A549 (cell line): ENCODE measurements at regions of chr1 and their contacts with region 1.

Region 1: GRCh38 chr1:26602378-26602959 is 72.9 kb downstream of the RPS6KA1 start:
- DNase-seq: peak; percentile 48
- ATAC-seq: no peak
- H3K4me3 ChIP-seq: no peak overlapping the region
- H3K27ac ChIP-seq: no peak overlapping the region
- H3K4me1 ChIP-seq: no peaks in the 10 kb centered on the region
- CTCF ChIP-seq: peak; percentile 81
- EP300 ChIP-seq: no peak
- POLR2A ChIP-seq: no peak
- RAD21 ChIP-seq: peak; percentile 88 to 91

Region 2: DNA sequence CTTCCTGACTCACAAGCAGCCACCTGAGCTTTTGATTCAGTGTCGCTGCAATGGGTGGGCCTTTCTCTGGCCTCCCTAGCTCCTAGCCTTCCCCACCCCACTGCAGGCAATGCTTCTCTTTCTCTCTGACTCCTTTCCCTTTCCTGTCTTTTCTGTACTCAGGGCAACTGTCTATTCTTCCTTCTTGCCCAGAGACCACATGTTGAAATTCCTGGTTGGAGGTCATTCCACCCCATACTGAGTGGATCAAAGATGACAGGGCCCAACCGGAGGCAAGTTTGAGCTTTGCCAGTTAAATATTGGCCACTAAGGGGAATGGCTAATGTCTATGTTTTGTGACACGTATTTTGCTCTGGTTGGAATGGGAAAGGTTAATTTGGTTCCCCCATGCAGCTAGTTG is 28.2 kb after region 1 on chr1:
- CTCF ChIA-PET with region 1: no interaction called
- POLR2A ChIA-PET with region 1: no interaction called
- DNase-seq: no peak
- ATAC-seq: no peak
- H3K4me3 ChIP-seq: no peak overlapping the region
- H3K27ac ChIP-seq: no peak overlapping the region
- H3K4me1 ChIP-seq: no peaks in the 10 kb centered on the region
- CTCF ChIP-seq: no peak
- EP300 ChIP-seq: no peak
- POLR2A ChIP-seq: no peak
- RAD21 ChIP-seq: no peak

Region 3: DNA sequence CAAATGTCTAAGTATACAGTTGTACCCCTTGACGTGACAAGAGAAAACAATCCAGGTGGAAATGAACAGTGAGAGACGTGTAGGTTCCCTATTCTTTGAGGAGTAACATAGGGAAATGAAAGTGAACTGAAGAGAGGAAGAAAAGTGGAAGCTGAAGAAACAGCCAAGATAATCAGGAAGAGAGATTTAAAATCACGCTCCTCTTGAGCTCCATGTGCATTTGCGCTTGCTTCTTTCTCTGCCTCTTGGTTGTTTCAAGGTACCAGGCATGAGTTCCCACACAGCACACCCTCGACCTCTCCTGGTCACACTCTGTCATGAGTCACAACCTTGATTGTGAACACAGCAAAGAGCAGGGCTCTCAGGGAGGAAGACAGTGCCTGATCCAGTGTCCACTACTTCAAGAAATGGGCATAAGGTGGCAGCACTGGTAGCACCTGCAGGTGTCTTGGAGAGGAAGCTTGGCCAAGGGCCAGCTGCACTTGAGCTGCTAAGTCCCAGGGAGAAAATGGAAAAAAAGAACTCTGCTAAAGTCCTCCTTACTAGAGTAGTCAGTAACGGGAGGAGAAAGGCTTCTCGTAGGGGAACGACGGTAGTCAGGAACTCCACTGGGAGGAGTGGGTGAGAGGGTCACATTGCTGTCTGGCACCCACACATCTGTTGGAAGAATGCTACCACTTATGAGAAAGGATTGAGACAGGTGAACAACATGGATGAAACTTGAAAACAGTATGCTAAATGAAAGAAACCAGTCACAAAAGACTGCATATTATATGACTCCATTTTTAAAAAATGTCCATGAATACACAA is 75.0 kb after region 1 on chr1:
- CTCF ChIA-PET with region 1: interaction called, 39 read pairs
- POLR2A ChIA-PET with region 1: no interaction called
- DNase-seq: peak; percentile 81 to 92
- ATAC-seq: peak; percentile 100
- H3K4me3 ChIP-seq: no peak overlapping the region
- H3K27ac ChIP-seq: peak overlapping the region; percentile 53 to 66
- H3K4me1 ChIP-seq: peaks cover 9% of the 10 kb centered on the region; the same call in 2 of the 3 replicates
- CTCF ChIP-seq: peak; percentile 75
- EP300 ChIP-seq: no peak
- POLR2A ChIP-seq: no peak
- RAD21 ChIP-seq: peak in 1 of 2 experiments; percentile 73

Region 4: GRCh38 chr1:26717017-26717491 is 114.6 kb after region 1 on chr1:
- CTCF ChIA-PET with region 1: interaction called, 13 read pairs
- POLR2A ChIA-PET with region 1: no interaction called
- DNase-seq: no peak
- ATAC-seq: peak in 1 of 2 experiments; percentile 34; a peak in 1 of 6 replicates
- H3K4me3 ChIP-seq: no peak overlapping the region
- H3K27ac ChIP-seq: no peak overlapping the region
- H3K4me1 ChIP-seq: peaks cover 38% of the 10 kb centered on the region
- CTCF ChIP-seq: no peak
- EP300 ChIP-seq: no peak
- POLR2A ChIP-seq: no peak
- RAD21 ChIP-seq: no peak

Region 5: GRCh38 chr1:26799479-26800142 is 197.1 kb after region 1 on chr1:
- CTCF ChIA-PET with region 1: interaction called, 23 read pairs
- POLR2A ChIA-PET with region 1: no interaction called
- DNase-seq: no peak
- ATAC-seq: peak; percentile 73 to 76
- H3K4me3 ChIP-seq: no peak overlapping the region
- H3K27ac ChIP-seq: peak overlapping the region; percentile 40 to 57; a peak in 5 of 6 replicates
- H3K4me1 ChIP-seq: peaks cover 14% of the 10 kb centered on the region
- CTCF ChIP-seq: no peak
- EP300 ChIP-seq: no peak
- POLR2A ChIP-seq: no peak
- RAD21 ChIP-seq: no peak

Region 6: DNA sequence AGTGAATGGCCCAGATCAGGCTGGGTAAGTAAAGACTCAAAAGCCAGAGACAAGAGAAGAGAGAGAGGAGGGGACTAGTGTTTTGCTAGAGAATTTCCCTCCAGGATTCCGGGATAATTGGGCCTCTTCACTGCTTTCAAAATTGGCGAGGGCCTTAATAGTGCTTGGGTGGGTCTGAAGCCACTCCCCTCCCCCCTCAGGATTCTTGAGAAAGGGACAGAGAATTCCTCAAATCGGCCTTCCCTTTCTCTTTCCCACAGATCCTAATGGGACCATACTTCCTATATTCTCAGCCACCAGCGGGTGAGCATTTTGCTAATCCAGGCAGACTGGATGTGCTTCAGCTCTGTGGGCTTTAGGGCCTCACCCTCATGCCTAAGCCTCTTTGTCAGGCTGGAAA is 272.4 kb after region 1 on chr1:
- CTCF ChIA-PET with region 1: interaction called, 12 read pairs
- POLR2A ChIA-PET with region 1: no interaction called
- DNase-seq: no peak
- ATAC-seq: no peak
- H3K4me3 ChIP-seq: no peak overlapping the region
- H3K27ac ChIP-seq: no peak overlapping the region
- H3K4me1 ChIP-seq: no peaks in the 10 kb centered on the region
- CTCF ChIP-seq: no peak
- EP300 ChIP-seq: no peak
- POLR2A ChIP-seq: no peak
- RAD21 ChIP-seq: no peak